Caco-2 (cell line): ENCODE measurements at regions of chr21 and their contacts with region 1.

Region 1: GRCh38 chr21:29360799-29361765 is 62.4 kb downstream of the BACH1 start:
- DNase-seq: peak; percentile 44 to 45
- H3K4me3 ChIP-seq: no peak overlapping the region
- H3K4me3 Mint-ChIP-seq: no peak overlapping the region
- H3K27ac Mint-ChIP-seq: no peak overlapping the region
- H3K4me1 ChIP-seq: 0 out of 2 replicates have a peak, but pooled peaks cover 3% of the 10 kb centered on the region
- H3K4me1 Mint-ChIP-seq: peaks cover 6% of the 10 kb centered on the region
- H3K27me3 ChIP-seq: no peaks in the 10 kb centered on the region
- H3K27me3 Mint-ChIP-seq: no peaks in the 10 kb centered on the region
- CTCF ChIP-seq: peak; percentile 22 to 44

Region 2: DNA sequence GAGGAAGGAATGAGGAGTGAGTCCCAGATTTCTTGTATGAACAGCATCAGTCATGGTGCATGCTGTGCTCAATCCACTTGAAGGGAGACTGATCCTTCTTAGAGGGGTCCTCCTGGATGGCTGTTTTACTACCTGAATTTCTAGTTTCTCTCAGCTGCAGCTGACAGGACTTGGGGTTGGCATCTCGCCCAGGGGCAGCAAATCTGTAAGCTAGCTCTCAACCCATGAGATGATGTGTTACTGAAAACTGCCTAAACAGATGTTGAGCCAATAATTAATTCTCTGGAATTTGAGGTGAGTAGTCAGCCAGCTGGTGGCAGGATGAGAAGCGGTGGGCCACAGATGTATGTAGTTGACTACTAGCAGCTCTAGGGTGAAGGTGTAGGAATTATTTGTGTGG is 42.7 kb before region 1 on chr21:
- CTCF ChIA-PET with region 1: no interaction called
- POLR2A ChIA-PET with region 1: no interaction called
- intact Hi-C with region 1: no loop called
- DNase-seq: no peak
- H3K4me3 ChIP-seq: no peak overlapping the region
- H3K4me3 Mint-ChIP-seq: no peak overlapping the region
- H3K27ac Mint-ChIP-seq: no peak overlapping the region
- H3K4me1 ChIP-seq: 0 out of 2 replicates have a peak, but pooled peaks cover 4% of the 10 kb centered on the region
- H3K4me1 Mint-ChIP-seq: peaks cover 25% of the 10 kb centered on the region
- H3K27me3 ChIP-seq: no peaks in the 10 kb centered on the region
- H3K27me3 Mint-ChIP-seq: no peaks in the 10 kb centered on the region
- CTCF ChIP-seq: no peak

Region 3: DNA sequence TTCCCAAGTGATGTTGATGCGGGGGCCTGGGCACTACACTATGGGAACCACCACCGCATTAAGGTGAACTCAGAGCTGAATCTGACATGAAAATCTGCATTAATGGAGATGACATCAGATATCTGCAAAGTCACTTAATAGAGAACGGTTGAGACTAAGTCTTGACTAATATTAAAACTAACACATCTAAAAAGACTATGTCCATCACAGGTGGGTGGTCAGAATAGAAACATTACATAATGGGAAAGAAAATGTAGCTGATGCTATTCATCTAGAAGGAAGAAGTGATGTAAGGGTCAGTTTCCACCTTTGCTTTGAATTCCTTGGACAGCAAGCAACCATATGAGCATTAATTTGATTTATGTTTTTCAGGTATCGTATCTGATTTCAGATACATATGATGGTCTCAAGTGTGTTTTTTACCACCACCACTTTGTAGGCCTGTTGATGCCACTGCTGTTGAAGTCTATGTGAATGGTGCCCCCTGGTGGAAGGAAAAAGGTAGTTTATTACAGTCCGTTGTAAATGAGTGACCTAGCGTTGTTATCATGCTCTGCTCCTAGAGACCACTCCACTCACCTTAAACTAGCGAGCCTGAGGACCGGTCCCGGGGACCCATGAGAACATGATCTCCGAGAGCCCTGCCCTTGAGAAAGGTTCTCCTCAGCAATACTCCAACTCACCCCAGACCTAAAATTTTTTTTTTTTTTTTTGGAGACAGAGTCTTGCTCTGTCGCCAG is 11.2 kb after region 1 on chr21:
- CTCF ChIA-PET with region 1: interaction called, 9 read pairs
- POLR2A ChIA-PET with region 1: no interaction called
- intact Hi-C with region 1: loop called (anchors 1 kb)
- DNase-seq: peak; percentile 56 to 72
- H3K4me3 ChIP-seq: no peak overlapping the region
- H3K4me3 Mint-ChIP-seq: no peak overlapping the region
- H3K27ac Mint-ChIP-seq: no peak overlapping the region
- H3K4me1 ChIP-seq: no peaks in the 10 kb centered on the region
- H3K4me1 Mint-ChIP-seq: no peaks in the 10 kb centered on the region
- H3K27me3 ChIP-seq: no peaks in the 10 kb centered on the region
- H3K27me3 Mint-ChIP-seq: no peaks in the 10 kb centered on the region
- CTCF ChIP-seq: peak; percentile 45 to 58

Region 4: GRCh38 chr21:29477941-29478340 is 116.9 kb after region 1 on chr21:
- CTCF ChIA-PET with region 1: no interaction called
- POLR2A ChIA-PET with region 1: no interaction called
- intact Hi-C with region 1: loop called (anchors 1 kb)
- DNase-seq: no peak
- H3K4me3 ChIP-seq: no peak overlapping the region
- H3K4me3 Mint-ChIP-seq: no peak overlapping the region
- H3K27ac Mint-ChIP-seq: no peak overlapping the region
- H3K4me1 ChIP-seq: no peaks in the 10 kb centered on the region
- H3K4me1 Mint-ChIP-seq: no peaks in the 10 kb centered on the region
- H3K27me3 ChIP-seq: no peaks in the 10 kb centered on the region
- H3K27me3 Mint-ChIP-seq: no peaks in the 10 kb centered on the region
- CTCF ChIP-seq: no peak

Region 5: DNA sequence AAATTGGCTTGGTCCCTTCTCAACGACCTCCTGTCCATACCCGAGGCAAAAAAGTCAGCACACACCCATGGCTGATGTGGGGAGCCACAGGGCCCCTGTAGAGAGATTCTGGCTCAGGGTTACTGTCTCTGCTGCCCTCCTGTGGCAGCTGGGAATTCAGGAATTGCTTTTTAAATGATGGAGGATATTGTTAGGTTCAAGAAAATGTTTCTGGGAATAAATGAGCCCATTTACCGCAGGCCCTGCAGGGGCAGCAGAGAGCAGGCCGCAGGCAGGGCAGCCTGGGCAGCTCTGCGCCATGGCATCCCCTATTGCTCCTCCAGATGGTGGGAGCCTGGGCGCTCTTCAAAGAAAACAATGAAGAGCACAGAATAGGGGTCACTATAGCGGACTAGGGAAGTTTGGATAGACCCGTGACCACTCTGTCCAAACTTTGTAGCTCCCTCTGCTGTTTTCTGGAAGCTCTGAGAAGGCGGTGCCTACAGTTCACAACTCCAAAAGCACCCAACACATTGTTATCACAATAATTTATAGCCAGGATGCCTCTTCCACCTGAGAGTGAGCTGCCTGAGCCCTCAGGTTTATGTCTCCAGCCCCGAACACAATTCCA is 138.8 kb after region 1 on chr21:
- CTCF ChIA-PET with region 1: interaction called, 5 read pairs
- POLR2A ChIA-PET with region 1: no interaction called
- intact Hi-C with region 1: loop called (anchors 1 kb)
- DNase-seq: peak; percentile 38 to 41
- H3K4me3 ChIP-seq: no peak overlapping the region
- H3K4me3 Mint-ChIP-seq: no peak overlapping the region
- H3K27ac Mint-ChIP-seq: no peak overlapping the region
- H3K4me1 ChIP-seq: no peaks in the 10 kb centered on the region
- H3K4me1 Mint-ChIP-seq: no peaks in the 10 kb centered on the region
- H3K27me3 ChIP-seq: no peaks in the 10 kb centered on the region
- H3K27me3 Mint-ChIP-seq: no peaks in the 10 kb centered on the region
- CTCF ChIP-seq: peak; percentile 34 to 70

Region 6: GRCh38 chr21:29849735-29850176 is 488.7 kb after region 1 on chr21:
- CTCF ChIA-PET with region 1: interaction called, 15 read pairs
- POLR2A ChIA-PET with region 1: no interaction called
- intact Hi-C with region 1: loop called (anchors 1 kb)
- DNase-seq: peak; percentile 56 to 59
- H3K4me3 ChIP-seq: no peak overlapping the region
- H3K4me3 Mint-ChIP-seq: no peak overlapping the region
- H3K27ac Mint-ChIP-seq: no peak overlapping the region
- H3K4me1 ChIP-seq: no peaks in the 10 kb centered on the region
- H3K4me1 Mint-ChIP-seq: no peaks in the 10 kb centered on the region
- H3K27me3 ChIP-seq: no peaks in the 10 kb centered on the region
- H3K27me3 Mint-ChIP-seq: peaks cover 21% of the 10 kb centered on the region
- CTCF ChIP-seq: peak; percentile 77 to 82

Region 7: GRCh38 chr21:30468900-30469714 is 1108.0 kb after region 1 on chr21:
- CTCF ChIA-PET with region 1: no interaction called
- POLR2A ChIA-PET with region 1: no interaction called
- intact Hi-C with region 1: no loop called
- DNase-seq: no peak
- H3K4me3 ChIP-seq: no peak overlapping the region
- H3K4me3 Mint-ChIP-seq: no peak overlapping the region
- H3K27ac Mint-ChIP-seq: no peak overlapping the region
- H3K4me1 ChIP-seq: no peaks in the 10 kb centered on the region
- H3K4me1 Mint-ChIP-seq: peaks cover 7% of the 10 kb centered on the region
- H3K27me3 ChIP-seq: no peaks in the 10 kb centered on the region
- H3K27me3 Mint-ChIP-seq: peaks cover 7% of the 10 kb centered on the region
- CTCF ChIP-seq: no peak